Caco-2 (cell line): ENCODE measurements at regions of chr6 and their contacts with region 1.

Region 1: DNA sequence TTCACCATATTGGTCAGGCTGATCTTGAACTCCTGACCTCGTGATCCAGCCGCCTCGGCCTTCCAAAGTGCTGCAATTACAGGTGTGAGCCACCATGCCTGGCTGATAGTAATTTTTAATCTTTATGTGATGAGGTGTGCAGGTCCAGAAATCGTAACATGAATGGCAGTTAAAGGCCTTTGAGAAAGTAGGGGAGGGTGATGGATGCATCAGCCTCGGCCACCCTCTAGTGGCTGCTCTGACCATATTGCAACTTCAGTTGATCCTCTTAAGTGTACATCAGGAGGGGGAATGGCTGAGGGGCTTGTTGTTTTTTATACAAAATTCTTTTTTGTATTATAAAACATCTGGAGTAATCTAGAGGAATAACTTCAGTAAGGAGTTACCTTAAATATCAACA is 193.0 kb downstream of the ZFAND3 start:
- DNase-seq: peak; percentile 31 to 35
- H3K4me3 ChIP-seq: no peak overlapping the region
- H3K4me3 Mint-ChIP-seq: no peak overlapping the region
- H3K27ac Mint-ChIP-seq: no peak overlapping the region
- H3K4me1 ChIP-seq: no peaks in the 10 kb centered on the region; the same call in 1 of the 2 replicates
- H3K4me1 Mint-ChIP-seq: no peaks in the 10 kb centered on the region
- H3K27me3 ChIP-seq: no peaks in the 10 kb centered on the region
- H3K27me3 Mint-ChIP-seq: no peaks in the 10 kb centered on the region
- CTCF ChIP-seq: peak; percentile 61 to 79

Region 2: DNA sequence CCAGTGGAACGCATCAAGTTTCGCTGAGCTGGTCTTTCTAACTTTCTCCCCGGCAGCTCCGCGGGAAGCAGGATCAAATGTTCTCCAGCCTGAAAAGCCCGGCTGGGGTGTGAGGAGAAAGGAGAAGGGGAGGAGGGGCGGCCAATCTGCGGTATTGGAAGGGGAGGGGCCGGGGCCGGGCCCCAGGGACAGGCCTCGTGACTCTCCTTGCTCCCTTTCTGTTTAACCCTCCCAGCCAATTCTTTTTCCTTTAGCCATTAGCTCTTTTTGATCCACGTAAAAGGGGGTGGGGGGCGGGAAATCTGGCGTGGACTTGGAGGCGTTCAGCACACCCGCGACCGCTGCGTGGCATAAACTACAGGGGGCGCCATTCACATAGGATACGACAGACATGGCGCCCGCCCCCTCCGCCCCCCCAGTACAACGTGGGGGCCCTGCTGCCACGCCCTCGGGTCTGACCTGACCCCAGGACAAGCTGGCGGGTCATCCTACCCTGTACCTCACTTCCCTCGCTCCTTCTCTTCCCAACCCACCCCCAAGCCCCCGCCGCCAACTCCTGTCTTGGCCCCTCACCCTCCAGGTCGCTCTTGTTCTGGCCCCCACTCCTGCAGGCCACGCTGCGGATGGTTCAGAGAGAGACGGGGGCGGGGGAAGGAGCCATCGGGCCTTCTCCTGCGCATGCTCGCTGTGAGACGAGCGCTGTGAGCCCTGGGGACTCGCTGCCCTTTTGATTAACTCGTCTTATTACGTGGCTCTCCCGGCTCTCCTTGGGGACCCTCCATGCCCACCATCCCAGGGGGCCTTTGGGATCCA is 307.1 kb before region 1 on chr6:
- CTCF ChIA-PET with region 1: no interaction called
- POLR2A ChIA-PET with region 1: no interaction called
- intact Hi-C with region 1: loop called (anchors 10 kb)
- DNase-seq: no peak
- H3K4me3 ChIP-seq: no peak overlapping the region
- H3K4me3 Mint-ChIP-seq: no peak overlapping the region
- H3K27ac Mint-ChIP-seq: no peak overlapping the region
- H3K4me1 ChIP-seq: no peaks in the 10 kb centered on the region
- H3K4me1 Mint-ChIP-seq: no peaks in the 10 kb centered on the region
- H3K27me3 ChIP-seq: no peaks in the 10 kb centered on the region
- H3K27me3 Mint-ChIP-seq: peaks cover 9% of the 10 kb centered on the region
- CTCF ChIP-seq: no peak

Region 3: DNA sequence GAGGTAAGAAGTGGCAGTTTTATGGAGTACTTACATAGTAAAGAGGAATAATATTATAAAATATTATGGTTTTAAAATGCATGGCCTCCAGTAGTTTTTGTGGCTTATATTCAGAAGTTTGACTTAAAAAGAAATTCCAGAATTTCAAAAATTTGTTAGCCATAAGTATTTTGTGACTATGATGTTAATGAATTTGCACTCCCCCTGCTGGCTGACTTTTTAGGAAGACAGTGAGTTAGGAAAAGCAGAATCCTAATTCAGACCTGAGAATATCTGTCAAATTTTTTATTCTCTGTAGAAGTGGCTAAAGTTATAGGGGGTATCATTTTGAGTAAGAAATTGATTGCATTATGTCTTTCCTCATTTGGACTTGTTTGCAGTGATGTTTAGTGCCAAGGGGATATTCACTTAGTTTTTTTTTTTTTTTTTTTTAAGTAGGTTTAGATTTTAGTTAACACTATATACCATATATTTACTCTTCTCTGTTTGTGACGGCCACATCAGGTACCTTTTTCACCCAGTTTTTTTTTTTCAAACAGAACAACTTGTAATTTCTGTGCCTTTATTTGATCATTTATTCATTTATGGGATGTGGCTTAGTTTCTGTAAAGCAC is 152.2 kb before region 1 on chr6:
- CTCF ChIA-PET with region 1: no interaction called
- POLR2A ChIA-PET with region 1: no interaction called
- intact Hi-C with region 1: loop called (anchors 10 kb)
- DNase-seq: peak in 1 of 2 experiments; percentile 55
- H3K4me3 ChIP-seq: no peak overlapping the region
- H3K4me3 Mint-ChIP-seq: no peak overlapping the region
- H3K27ac Mint-ChIP-seq: no peak overlapping the region
- H3K4me1 ChIP-seq: no peaks in the 10 kb centered on the region; the same call in 1 of the 2 replicates
- H3K4me1 Mint-ChIP-seq: peaks cover 2% of the 10 kb centered on the region
- H3K27me3 ChIP-seq: no peaks in the 10 kb centered on the region
- H3K27me3 Mint-ChIP-seq: no peaks in the 10 kb centered on the region
- CTCF ChIP-seq: peak; percentile 49 to 54

Region 4: DNA sequence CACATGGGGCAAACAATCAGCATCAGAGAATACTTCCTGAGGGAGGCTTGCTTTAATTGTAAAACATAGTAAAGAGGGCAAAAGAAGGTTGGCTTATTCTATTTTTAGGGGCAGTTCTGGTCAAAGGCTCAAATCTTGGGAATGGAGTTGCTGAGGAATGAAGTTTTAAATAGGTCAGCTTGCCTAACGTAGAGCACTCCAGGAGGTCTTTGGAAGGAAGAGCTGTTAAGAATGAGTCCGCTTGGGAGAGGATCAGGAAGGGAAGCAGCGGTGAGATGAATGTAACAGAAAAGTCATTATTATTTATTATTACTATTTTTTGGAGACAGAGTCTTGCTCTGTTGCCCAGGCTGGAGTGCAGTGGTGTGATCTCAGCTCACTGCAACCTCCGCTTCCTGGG is 84.4 kb before region 1 on chr6:
- CTCF ChIA-PET with region 1: no interaction called
- POLR2A ChIA-PET with region 1: no interaction called
- intact Hi-C with region 1: no loop called
- DNase-seq: no peak
- H3K4me3 ChIP-seq: no peak overlapping the region
- H3K4me3 Mint-ChIP-seq: no peak overlapping the region
- H3K27ac Mint-ChIP-seq: no peak overlapping the region
- H3K4me1 ChIP-seq: peaks cover 18% of the 10 kb centered on the region; the same call in 1 of the 2 replicates
- H3K4me1 Mint-ChIP-seq: peaks cover 13% of the 10 kb centered on the region
- H3K27me3 ChIP-seq: no peaks in the 10 kb centered on the region
- H3K27me3 Mint-ChIP-seq: no peaks in the 10 kb centered on the region
- CTCF ChIP-seq: no peak

Region 5: DNA sequence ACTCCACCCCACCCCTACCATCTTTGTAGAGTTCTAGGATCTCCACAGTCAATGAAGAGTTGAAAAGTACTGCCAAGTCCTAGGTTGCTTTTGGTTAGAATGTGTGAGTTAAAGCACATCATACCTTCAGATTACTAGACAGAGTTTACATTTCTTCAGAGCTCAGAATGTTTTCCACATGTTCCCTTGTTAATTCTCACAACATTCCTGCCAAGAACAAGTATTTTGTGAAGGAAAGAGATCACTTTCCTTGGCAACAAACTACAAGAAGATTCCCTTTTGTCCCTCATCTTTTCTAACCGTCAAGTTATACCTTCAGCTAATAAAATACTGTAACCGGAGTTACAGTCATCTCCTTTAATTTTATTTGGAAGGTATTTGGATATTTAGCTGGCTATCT is 73.8 kb after region 1 on chr6:
- CTCF ChIA-PET with region 1: interaction called, 11 read pairs
- POLR2A ChIA-PET with region 1: no interaction called
- intact Hi-C with region 1: no loop called
- DNase-seq: no peak
- H3K4me3 ChIP-seq: no peak overlapping the region
- H3K4me3 Mint-ChIP-seq: no peak overlapping the region
- H3K27ac Mint-ChIP-seq: no peak overlapping the region
- H3K4me1 ChIP-seq: no peaks in the 10 kb centered on the region
- H3K4me1 Mint-ChIP-seq: peaks cover 1% of the 10 kb centered on the region
- H3K27me3 ChIP-seq: no peaks in the 10 kb centered on the region
- H3K27me3 Mint-ChIP-seq: no peaks in the 10 kb centered on the region
- CTCF ChIP-seq: no peak